Adrenal gland (tissue), 19 donors: ENCODE measurements at regions of chr11 and their contacts with region 1.

Region 1: GRCh38 chr11:27158722-27159679 is 118.4 kb downstream of the BBOX1 start:
- DNase-seq: peak; percentile 54 to 83 (median 64)
- H3K4me3 ChIP-seq: no peak overlapping the region
- H3K27ac ChIP-seq: no peak overlapping the region
- H3K4me1 ChIP-seq: no peaks in the 10 kb centered on the region
- H3K27me3 ChIP-seq: no peaks in the 10 kb centered on the region
- CTCF ChIP-seq: peak; percentile 81 to 92 (median 90)
- POLR2A ChIP-seq: no peak

Region 2: DNA sequence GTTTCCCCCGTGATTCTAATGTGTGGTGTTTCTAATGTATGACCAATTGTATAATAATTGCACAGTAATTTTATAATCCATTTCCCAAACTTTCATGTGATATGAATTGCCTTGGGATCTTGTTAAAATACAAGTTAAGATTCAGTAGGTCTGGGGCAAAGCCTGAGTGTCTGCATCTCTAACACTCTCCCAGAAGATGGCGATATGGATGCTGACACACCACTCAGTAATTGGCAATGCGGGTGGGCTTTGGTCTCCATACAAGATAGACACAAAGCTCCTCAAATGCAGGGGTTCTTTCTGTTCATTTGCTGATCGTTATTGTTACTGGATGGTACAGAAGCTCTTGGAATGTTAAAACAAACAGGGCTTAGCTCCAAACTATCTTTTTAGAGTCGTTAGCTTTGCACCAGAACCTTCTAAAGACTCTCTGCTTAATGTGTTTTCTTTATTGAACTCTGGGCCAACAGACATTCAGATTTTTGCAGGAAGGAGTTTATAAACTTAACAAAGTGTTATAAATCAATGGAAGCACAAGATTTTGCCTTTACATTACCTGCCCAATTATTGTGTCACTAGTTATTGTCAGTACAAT is 872.4 kb before region 1 on chr11:
- intact Hi-C with region 1: loop called in 1 of 2 experiments (anchors 10 kb)
- DNase-seq: no peak
- H3K4me3 ChIP-seq: no peak overlapping the region
- H3K27ac ChIP-seq: no peak overlapping the region
- H3K4me1 ChIP-seq: no peaks in the 10 kb centered on the region
- H3K27me3 ChIP-seq: peaks cover 5% of the 10 kb centered on the region
- CTCF ChIP-seq: no peak
- POLR2A ChIP-seq: no peak

Region 3: GRCh38 chr11:26753723-26754504 is 405.1 kb before region 1 on chr11:
- intact Hi-C with region 1: loop called (anchors 2 to 10 kb)
- DNase-seq: peak; percentile 16 to 77 (median 36)
- H3K4me3 ChIP-seq: no peak overlapping the region
- H3K27ac ChIP-seq: no peak overlapping the region
- H3K4me1 ChIP-seq: no peaks in the 10 kb centered on the region
- H3K27me3 ChIP-seq: no peaks in the 10 kb centered on the region
- CTCF ChIP-seq: peak; percentile 56 to 75 (median 67)
- POLR2A ChIP-seq: no peak

Region 4: GRCh38 chr11:26974069-26974783 is 184.8 kb before region 1 on chr11:
- intact Hi-C with region 1: no loop called
- DNase-seq: no peak
- H3K4me3 ChIP-seq: no peak overlapping the region
- H3K27ac ChIP-seq: no peak overlapping the region
- H3K4me1 ChIP-seq: no peaks in the 10 kb centered on the region
- H3K27me3 ChIP-seq: no peaks in the 10 kb centered on the region
- CTCF ChIP-seq: no peak
- POLR2A ChIP-seq: no peak